Activated T-helper 1 cell treated with anti-CD3 and anti-CD28 coated beads, Interleukin-12 subunit alpha, Interleukin-12 subunit beta, Interleukin-2, Interleukin-4 antibody, amounts not matched to agents 30 ng/mL and 10 ng/mL and 1 ng/mL, durations not matched to agents 14 hours and 24 hours and 36 hours (primary cell): ENCODE measurements at regions of chr17 and their contacts with region 1.

Region 1: GRCh38 chr17:75154195-75155106 is at the start of gene JPT1:
- DNase-seq: peak; percentile 97
- H3K4me3 Mint-ChIP-seq: peak within 1 kb of the TSS; percentile 97
- H3K27ac Mint-ChIP-seq: peak within 1 kb of the TSS; percentile 93
- H3K4me1 Mint-ChIP-seq: peaks cover 34% of the 10 kb centered on the region
- H3K27me3 Mint-ChIP-seq: no peaks in the 10 kb centered on the region
- total RNA-seq, gene JPT1: 271 and 299 TPM in 2 replicates

Region 2: GRCh38 chr17:74430706-74431567 is 723.5 kb before region 1 on chr17:
- intact Hi-C with region 1: no loop called
- DNase-seq: no peak
- H3K4me3 Mint-ChIP-seq: no peak overlapping the region
- H3K27ac Mint-ChIP-seq: no peak overlapping the region
- H3K4me1 Mint-ChIP-seq: no peaks in the 10 kb centered on the region
- H3K27me3 Mint-ChIP-seq: peaks cover 49% of the 10 kb centered on the region

Region 3: DNA sequence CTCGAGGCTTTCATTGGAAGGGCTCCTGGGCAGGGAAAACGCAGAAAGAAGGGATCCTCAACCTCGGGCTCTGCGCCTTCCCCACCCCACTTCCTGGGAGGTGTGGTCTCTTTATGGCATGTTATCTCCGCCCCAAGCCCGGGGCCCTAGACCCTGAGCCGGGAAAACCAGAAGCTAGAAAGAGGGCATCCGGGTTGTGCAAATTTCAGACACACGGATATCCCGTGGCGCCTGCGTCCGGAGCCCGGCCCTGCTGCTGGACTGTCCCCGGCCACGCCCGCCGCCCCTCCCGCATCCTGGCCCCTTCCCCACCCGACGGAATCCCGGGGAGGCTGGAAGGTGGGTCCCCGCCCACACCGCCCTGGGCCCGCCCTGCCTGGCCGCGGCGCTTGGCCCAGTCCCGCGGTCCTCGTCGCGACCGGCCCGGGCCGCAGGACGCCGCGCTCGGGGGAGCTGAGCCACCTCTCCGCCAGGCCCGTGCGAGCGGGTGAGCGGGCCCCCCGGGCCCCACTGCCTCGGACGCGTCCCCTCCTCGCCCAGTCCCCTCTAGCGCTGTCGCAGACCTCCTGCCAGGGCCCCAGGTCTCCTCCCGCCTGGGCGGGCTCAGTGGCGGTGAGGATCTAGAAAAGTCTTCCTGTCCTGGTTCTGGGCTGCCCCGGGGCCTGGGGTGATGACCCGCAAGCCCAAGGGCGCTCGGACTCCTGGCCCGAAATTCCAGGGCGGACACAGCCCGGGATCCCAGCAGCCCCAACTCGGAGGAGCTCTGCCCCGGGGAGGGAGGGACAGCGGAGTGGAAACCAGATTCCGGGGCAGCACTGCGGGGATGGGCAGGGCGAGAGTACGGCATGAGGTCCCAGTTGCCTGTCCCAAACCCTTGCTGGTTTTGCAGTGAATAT is 66.6 kb before region 1 on chr17 and contains the start of gene SLC16A5:
- intact Hi-C with region 1: no loop called
- DNase-seq: peak; percentile 49
- H3K4me3 Mint-ChIP-seq: peak within 1 kb of the TSS; percentile 80
- H3K27ac Mint-ChIP-seq: peak within 1 kb of the TSS; percentile 59
- H3K4me1 Mint-ChIP-seq: peaks cover 33% of the 10 kb centered on the region
- H3K27me3 Mint-ChIP-seq: no peaks in the 10 kb centered on the region
- total RNA-seq, gene SLC16A5: 5.5 and 7.2 TPM in 2 replicates

Region 4: GRCh38 chr17:75173526-75173925 is 19.1 kb after region 1 on chr17:
- intact Hi-C with region 1: loop called (anchors 2 kb)
- DNase-seq: no peak
- H3K4me3 Mint-ChIP-seq: no peak overlapping the region
- H3K27ac Mint-ChIP-seq: no peak overlapping the region
- H3K4me1 Mint-ChIP-seq: peaks cover 20% of the 10 kb centered on the region
- H3K27me3 Mint-ChIP-seq: no peaks in the 10 kb centered on the region

Region 5: DNA sequence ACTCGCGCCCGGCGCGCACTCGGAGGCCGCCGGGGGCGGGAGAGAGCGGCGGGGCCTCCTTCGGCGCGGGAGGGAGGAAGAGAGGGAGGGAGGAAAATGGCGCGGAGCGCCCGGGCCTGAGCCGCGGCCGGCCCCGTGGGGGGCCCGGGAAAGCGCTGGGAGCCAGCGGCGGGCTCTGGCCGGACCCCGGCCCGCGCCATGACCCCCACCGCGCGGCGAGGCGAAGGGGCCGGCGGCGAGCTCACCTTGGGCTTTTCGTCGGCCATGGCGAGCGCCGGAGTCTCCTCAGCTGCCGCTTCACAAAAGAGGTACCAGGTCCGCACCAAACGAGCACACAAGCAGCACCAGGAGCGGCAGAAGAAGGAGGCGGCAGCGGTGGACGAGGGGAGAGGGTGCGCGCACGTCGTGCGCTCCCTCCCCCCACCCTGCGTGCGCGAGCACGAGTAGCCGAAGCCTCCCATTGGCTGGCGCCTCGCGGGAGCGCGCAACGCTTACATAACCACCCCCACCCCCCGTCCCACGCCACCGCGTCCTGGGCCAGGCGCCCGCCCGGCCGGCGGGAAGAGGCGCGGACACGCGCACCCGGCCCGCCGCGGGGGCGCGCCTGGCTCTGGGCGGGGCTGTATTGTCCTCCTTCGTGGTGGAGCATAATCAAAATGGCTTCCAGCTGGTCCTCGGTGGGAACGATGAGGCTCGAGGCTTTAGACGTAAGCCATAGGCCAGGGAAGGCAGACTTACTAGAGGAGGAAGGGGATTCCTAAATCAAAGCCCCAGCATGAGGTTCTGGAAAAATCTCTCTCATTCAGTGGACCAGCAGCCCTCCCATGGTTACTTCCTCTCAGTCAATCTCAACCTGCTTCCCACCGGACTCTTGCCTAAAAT is 28.4 kb after region 1 on chr17 and contains the start of gene SUMO2:
- intact Hi-C with region 1: loop called (anchors 1 kb)
- DNase-seq: peak; percentile 93
- H3K4me3 Mint-ChIP-seq: peak within 1 kb of the TSS; percentile 99
- H3K27ac Mint-ChIP-seq: peak within 1 kb of the TSS; percentile 98
- H3K4me1 Mint-ChIP-seq: peaks cover 38% of the 10 kb centered on the region
- H3K27me3 Mint-ChIP-seq: no peaks in the 10 kb centered on the region
- total RNA-seq, gene SUMO2: 649 and 656 TPM in 2 replicates